ENCODE measurements at regions of chr2 and their contacts with region 1.

Region 1: GRCh38 chr2:219278655-219279516 is at the start of gene DNAJB2:
- DNase-seq: peak; percentile 100
- H3K4me3 Mint-ChIP-seq: peak within 1 kb of the TSS; percentile 80
- H3K27ac Mint-ChIP-seq: peak within 1 kb of the TSS; percentile 95
- H3K4me1 Mint-ChIP-seq: peaks cover 43% of the 10 kb centered on the region
- H3K27me3 Mint-ChIP-seq: no peaks in the 10 kb centered on the region
- total RNA-seq, gene DNAJB2: 37.3 to 39.1 TPM

Region 2: GRCh38 chr2:219104107-219105035 is 174.5 kb before region 1 on chr2:
- CTCF ChIA-PET with region 1: no interaction called
- POLR2A ChIA-PET with region 1: no interaction called
- intact Hi-C with region 1: no loop called
- DNase-seq: peak; percentile 18
- H3K4me3 Mint-ChIP-seq: no peak overlapping the region
- H3K27ac Mint-ChIP-seq: peak overlapping the region; percentile 53
- H3K4me1 Mint-ChIP-seq: peaks cover 29% of the 10 kb centered on the region
- H3K27me3 Mint-ChIP-seq: no peaks in the 10 kb centered on the region

Region 3: DNA sequence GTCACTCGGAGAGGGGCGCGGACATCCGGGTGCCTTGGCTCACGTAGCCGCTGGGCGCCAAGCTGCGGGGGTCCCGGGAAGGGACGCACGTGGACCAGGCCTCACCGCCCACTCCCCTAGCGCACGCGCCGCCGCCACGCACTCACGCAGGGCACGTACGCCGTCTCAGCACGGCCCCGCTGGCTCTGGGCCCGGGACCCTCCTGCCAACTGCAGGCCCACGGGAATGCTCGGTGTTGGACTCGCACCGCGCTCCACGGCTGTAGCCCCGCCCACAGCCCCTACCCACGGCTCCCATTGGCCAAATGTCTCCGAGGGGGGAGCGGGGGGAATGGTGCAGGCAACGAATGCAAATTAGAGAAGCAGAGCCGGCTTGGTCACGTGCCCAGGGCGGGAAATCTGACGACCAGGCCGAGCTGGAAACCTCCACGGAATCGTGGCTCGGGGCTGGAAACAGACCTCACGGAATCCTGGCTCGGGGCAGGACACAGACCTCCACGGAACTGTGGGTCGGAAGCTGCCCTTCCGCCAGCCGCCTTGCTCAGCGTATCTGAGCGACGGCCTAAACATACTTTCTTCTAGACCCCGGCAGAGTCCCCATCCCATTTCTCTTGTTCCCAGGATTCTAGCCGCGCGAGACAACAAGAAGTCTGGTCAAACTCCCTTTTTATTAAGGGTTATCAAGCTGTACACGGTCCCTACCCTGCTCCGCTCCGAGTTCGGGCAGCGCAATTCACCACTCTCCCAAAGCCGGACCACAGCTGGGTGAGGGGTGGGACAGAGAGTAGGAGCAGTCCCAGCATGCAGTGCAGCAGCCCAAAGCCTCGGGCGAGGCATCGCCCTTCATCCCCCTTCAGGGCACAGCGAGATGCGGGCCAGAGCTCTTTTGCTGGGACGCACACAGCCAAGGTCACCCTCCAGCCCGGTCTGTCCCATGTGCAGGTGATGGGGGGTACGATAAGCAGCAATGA is 59.9 kb before region 1 on chr2 and contains the start of gene ABCB6:
- CTCF ChIA-PET with region 1: interaction called, 8 read pairs
- POLR2A ChIA-PET with region 1: interaction called, 4 read pairs
- intact Hi-C with region 1: loop called (anchors 1 kb)
- DNase-seq: peak; percentile 92
- H3K4me3 Mint-ChIP-seq: peak within 1 kb of the TSS; percentile 80
- H3K27ac Mint-ChIP-seq: peak within 1 kb of the TSS; percentile 69
- H3K4me1 Mint-ChIP-seq: peaks cover 19% of the 10 kb centered on the region
- H3K27me3 Mint-ChIP-seq: no peaks in the 10 kb centered on the region
- total RNA-seq, gene ABCB6: 11.5 to 11.7 TPM

Region 4: DNA sequence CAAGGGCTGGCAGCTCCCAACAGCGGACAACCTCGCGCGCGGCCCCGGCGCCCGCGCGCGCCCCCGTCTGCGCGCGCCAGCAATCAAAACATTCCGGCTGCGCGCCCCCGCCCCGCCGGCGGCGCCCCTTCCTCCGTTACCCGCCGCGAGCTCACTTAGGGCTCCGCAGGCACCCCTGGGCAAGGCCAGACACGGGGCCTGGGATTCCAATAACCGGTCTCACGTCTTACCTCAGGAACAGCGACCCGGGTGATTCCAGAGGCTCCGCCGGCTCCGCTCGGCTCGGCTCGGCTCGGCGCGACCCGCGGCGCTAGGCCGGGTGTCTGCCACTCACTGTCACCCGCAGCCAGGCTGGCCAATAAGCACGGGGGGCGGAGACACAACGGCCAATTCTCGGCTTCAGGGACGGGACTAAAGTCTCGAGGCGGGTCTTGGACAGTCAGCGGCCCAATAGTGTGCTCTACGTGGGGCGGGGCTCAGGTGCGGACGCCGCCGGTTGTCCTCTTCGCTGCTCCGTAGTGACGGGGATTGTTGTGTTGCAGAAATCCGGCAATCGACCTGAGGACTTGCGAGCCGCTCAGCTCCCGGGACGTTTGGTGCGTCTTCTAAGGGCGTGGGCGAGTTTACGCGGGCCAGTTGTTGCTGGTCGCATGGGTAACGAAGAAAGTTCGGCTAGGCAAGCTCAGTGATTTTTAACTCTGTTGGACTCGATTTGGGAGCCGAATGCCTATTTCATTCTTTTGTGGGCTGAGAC is 49.4 kb before region 1 on chr2 and contains the starts of genes ANKZF1 and ATG9A:
- CTCF ChIA-PET with region 1: interaction called, 8 read pairs
- POLR2A ChIA-PET with region 1: interaction called, 17 read pairs
- intact Hi-C with region 1: loop called (anchors 1 kb)
- DNase-seq: peak; percentile 99
- H3K4me3 Mint-ChIP-seq: peak within 1 kb of the TSS; percentile 95
- H3K27ac Mint-ChIP-seq: peak within 1 kb of the TSS; percentile 99
- H3K4me1 Mint-ChIP-seq: peaks cover 50% of the 10 kb centered on the region
- H3K27me3 Mint-ChIP-seq: no peaks in the 10 kb centered on the region
- total RNA-seq, gene ANKZF1: 97.0 to 97.5 TPM
- total RNA-seq, gene ATG9A: 34.7 to 39.5 TPM

Region 5: DNA sequence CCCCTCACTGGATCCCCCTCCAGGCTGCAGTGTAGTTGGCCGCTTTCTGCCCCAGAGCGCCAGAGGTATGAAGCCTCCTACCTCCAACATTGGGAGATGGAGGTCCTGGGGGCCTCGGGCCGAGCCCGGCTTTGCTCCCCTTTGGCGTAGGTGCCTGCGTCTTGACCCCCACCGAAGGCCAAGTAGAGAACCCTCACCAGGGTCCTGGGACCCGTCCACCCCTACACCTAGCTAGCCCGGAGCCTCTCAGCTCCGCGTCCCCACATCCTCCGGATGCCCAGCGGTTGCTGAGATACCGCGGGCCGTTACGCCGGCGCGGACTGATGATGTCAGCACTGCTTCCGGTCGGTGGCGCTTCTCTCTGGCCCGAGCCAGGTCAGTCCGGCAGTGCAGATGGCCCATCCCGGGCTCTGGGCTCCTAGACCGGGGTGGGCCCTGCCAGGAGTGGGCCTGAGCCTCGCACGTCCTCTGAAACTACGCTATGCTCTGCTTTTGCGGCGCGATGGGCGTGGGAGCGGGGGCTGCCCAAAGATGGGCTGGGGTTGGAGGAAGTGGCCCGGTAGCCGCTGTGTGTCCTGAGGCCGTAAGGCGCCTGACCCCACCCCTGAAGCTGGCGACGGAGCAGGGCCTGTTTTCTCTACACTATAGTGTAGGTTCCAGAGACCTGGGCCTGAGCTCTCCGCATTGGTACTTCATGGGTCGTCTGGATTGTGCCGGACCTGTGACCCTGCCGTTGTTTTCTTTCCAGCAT is 33.6 kb before region 1 on chr2 and contains the starts of genes GLB1L and STK16:
- CTCF ChIA-PET with region 1: interaction called, 25 read pairs
- POLR2A ChIA-PET with region 1: interaction called, 22 read pairs
- intact Hi-C with region 1: loop called (anchors 1 kb)
- DNase-seq: peak; percentile 95
- H3K4me3 Mint-ChIP-seq: peak within 1 kb of the TSS; percentile 98
- H3K27ac Mint-ChIP-seq: peak within 1 kb of the TSS; percentile 98
- H3K4me1 Mint-ChIP-seq: peaks cover 61% of the 10 kb centered on the region
- H3K27me3 Mint-ChIP-seq: no peaks in the 10 kb centered on the region
- total RNA-seq, gene GLB1L: 4.8 to 4.9 TPM
- total RNA-seq, gene STK16: 37.1 to 37.8 TPM

Region 6: GRCh38 chr2:219253753-219254590 is 24.9 kb before region 1 on chr2 and contains the start of gene TUBA4A:
- CTCF ChIA-PET with region 1: interaction called, 95 read pairs
- POLR2A ChIA-PET with region 1: interaction called, 85 read pairs
- intact Hi-C with region 1: loop called (anchors 1 kb)
- DNase-seq: peak; percentile 92
- H3K4me3 Mint-ChIP-seq: peak within 1 kb of the TSS; percentile 86
- H3K27ac Mint-ChIP-seq: peak within 1 kb of the TSS; percentile 97
- H3K4me1 Mint-ChIP-seq: peaks cover 49% of the 10 kb centered on the region
- H3K27me3 Mint-ChIP-seq: no peaks in the 10 kb centered on the region
- total RNA-seq, gene TUBA4A: 219 to 229 TPM

Region 7: GRCh38 chr2:219261024-219261855 is 17.6 kb before region 1 on chr2:
- CTCF ChIA-PET with region 1: interaction called, 95 read pairs
- POLR2A ChIA-PET with region 1: interaction called, 5 read pairs
- intact Hi-C with region 1: no loop called
- DNase-seq: no peak
- H3K4me3 Mint-ChIP-seq: no peak overlapping the region
- H3K27ac Mint-ChIP-seq: no peak overlapping the region
- H3K4me1 Mint-ChIP-seq: no peaks in the 10 kb centered on the region
- H3K27me3 Mint-ChIP-seq: peaks cover 1% of the 10 kb centered on the region